A549 (cell line): ENCODE measurements at regions of chr14 and their contacts with region 1.

Region 1: DNA sequence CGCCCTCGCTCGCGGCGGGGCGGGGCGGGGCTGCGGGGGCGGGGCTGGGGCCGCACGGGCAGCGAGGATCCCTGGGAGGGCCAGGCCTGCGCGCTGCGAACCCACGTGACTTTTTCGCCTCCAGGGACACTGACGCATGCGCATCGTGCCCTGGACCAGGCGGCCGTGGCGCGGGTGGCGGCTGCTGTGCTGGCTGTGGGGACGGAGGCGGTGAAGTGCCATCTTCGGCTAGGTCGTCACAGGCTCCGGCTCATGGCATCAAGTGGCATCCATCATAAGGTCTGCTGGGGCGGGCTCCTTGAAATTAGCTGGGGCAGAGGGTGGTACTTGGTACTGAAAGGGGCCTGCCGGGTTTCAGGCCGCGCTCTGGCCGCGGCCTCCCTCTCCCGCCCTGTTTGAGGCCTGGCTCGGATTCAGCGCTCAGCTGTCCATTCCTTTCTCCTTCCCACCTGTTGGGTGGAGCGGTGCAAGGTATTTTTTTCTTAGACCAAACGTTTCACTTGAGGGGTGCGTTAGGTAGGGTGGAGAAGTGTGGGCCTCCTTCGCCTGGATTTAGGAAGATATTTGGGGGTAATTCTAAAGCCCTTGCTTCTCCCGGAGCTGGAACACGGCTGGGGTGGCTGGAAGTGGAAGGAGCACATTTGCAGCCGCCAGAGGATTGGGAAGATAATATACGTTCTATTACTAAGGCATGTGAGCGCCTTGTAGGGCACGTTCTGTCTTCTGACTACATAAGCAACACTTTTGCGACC is at the start of gene PRPF39:
- DNase-seq: peak; percentile 91 to 93
- ATAC-seq: peak; percentile 93 to 96
- H3K4me3 ChIP-seq: peak within 1 kb of the TSS; percentile 60
- H3K27ac ChIP-seq: peak within 1 kb of the TSS; percentile 80 to 86
- H3K4me1 ChIP-seq: peaks cover 40% of the 10 kb centered on the region
- CTCF ChIP-seq: no peak
- EP300 ChIP-seq: no peak
- POLR2A ChIP-seq: peak; percentile 99
- RAD21 ChIP-seq: no peak
- polyA plus RNA-seq, gene PRPF39: 47.3 and 57.5 TPM in 2 replicates

Region 2: DNA sequence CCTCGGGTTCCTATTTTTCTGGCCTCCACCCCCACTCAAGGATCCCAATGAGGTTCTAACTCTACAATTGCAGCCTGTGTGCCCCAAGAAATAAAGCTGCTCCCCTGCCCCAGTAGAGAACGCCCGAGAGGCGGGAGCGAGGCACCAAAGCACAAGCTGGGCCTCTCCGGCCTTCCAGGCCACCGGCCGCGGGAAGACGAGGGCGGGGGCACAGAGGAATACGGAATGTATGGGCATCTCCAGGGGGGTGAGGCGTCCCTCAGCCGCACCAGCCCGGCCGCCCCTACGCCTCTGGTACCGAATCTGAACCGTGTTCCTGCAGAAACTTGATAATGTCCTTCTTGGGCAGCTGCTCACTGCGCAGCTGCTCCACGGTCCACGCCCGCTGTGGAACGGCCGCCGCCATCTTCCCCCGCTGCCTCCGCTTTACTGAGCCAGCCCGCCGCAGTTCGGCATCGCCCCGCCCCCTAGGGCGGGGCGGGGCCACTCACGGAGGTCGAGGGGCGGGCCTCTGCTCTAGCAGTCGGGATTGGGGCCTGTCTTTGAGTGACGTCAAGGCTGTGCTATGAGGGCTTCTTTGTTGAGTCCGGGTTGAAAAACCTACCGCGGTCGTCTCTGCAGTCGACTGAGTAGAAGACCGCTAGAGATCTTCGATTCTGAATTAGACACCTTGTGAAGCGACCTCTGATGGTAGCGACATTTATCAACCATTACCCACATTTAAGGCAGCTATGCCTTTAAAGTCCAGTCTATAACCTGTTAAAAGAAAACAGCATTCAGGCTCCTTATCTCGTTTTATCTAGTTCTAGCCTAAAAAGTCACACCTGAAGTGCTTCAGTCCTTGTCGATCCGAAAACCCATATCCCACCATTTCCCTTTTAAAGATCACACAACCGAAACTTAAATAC is 50.2 kb after region 1 on chr14 and contains the start of gene FKBP3:
- CTCF ChIA-PET with region 1: interaction called, 4 read pairs
- POLR2A ChIA-PET with region 1: interaction called, 12 read pairs
- DNase-seq: peak; percentile 97 to 99
- ATAC-seq: peak; percentile 93 to 94
- H3K4me3 ChIP-seq: peak within 1 kb of the TSS; percentile 78
- H3K27ac ChIP-seq: peak within 1 kb of the TSS; percentile 91 to 96
- H3K4me1 ChIP-seq: peaks cover 20% of the 10 kb centered on the region
- CTCF ChIP-seq: peak; percentile 37
- EP300 ChIP-seq: no peak
- POLR2A ChIP-seq: peak; percentile 87
- RAD21 ChIP-seq: peak; percentile 19 to 28; a peak in 1 of 5 replicates
- polyA plus RNA-seq, gene FKBP3: 106 and 202 TPM in 2 replicates